A673 (cell line): ENCODE measurements at regions of chr2 and their contacts with region 1.

Region 1: DNA sequence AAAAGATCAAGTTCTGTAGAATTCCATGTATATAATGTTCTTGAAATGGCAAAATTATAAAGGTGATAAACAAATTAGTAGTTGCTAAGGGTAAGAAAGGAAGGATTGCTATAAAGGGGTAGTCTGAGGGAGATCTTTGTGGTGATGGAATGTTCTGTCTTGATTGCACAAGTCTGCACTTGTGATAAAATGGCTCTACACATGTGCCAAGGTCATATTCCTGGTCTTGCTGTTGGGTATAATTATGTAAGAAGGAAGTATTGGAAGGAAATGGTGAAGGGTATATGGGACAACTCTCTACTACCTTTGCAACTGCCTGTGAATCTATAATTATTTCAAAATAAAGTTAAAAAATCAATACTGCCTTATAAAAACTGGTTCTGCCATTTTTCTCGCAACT is 15.3 kb downstream of the SGPP2 start:
- DNase-seq: no peak
- H3K4me3 ChIP-seq: no peak overlapping the region
- H3K27ac ChIP-seq: no peak overlapping the region
- H3K4me1 ChIP-seq: peaks cover 25% of the 10 kb centered on the region
- H3K27me3 ChIP-seq: peaks cover 24% of the 10 kb centered on the region
- CTCF ChIP-seq: no peak

Region 2: DNA sequence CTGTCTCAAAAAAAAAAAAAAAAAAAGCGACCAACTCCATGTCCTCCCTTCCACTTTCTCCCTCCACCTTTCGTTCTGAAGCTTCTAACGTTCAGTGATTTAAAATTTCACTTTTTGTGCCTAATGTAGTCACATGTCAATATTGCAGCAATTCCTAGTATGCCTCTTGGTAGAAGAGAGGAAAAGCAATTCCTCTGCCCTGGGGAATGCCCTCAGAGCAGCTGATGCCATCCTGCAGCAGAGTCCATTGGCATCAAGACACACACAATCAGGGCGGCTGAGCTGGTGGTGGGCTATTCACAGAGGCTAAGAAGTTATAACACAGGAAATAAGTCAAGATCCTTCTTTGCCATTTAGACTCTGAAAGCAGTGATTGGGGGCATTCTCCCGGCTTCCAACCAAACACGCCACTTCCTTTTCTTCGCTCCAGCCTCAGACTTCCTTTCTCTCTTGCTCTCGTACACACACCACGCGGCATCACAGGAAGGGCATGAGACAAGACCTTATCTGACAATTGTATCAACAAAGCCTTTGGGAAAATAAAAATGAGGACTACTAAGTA is 303.6 kb after region 1 on chr2:
- CTCF ChIA-PET with region 1: no interaction called
- POLR2A ChIA-PET with region 1: interaction called, 15 read pairs
- intact Hi-C with region 1: no loop called
- DNase-seq: no peak
- H3K4me3 ChIP-seq: no peak overlapping the region
- H3K27ac ChIP-seq: no peak overlapping the region
- H3K4me1 ChIP-seq: no peaks in the 10 kb centered on the region
- H3K27me3 ChIP-seq: no peaks in the 10 kb centered on the region
- CTCF ChIP-seq: no peak